ENCODE measurements at regions of chr4 and their contacts with region 1.

Region 1: GRCh38 chr4:121252224-121252806 is 88.2 kb upstream of the TNIP3 start:
- DNase-seq: peak; percentile 52 to 76
- ATAC-seq: peak; percentile 64 to 82 (median 73)
- H3K4me3 ChIP-seq: no peak overlapping the region
- H3K27ac ChIP-seq: no peak overlapping the region
- H3K4me1 ChIP-seq: peaks cover 3% of the 10 kb centered on the region
- H3K27me3 ChIP-seq: no peaks in the 10 kb centered on the region
- CTCF ChIP-seq: peak; percentile 78

Region 2: DNA sequence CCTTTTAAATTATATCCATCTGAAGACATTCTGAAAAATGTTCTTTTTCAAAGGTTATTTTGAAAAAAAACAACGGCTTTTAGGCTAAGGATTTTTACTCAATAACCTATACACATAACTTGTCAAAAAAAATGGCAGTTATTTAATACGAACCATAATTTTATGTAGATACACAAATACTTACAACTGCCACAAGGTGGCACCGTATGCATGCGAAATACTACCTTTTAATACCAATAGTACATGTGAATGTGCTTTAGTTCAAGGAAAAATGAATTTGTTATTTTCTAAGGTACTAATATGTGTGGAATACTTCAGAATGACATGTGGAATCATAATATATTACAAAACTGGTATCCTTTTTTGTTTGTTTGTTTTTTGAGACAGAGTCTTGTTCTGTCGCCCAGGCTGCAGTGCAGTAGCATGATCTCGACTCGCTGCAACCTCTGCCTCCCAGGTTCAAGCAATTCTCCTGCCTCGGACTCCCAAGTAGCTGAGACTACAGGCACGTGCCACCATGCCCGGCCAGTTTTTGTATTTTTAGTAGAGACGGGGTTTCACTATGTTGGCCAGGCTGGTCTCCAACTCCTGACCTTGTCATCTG is 1181.0 kb before region 1 on chr4:
- intact Hi-C with region 1: loop called (anchors 10 kb)
- DNase-seq: no peak
- ATAC-seq: no peak
- H3K4me3 ChIP-seq: no peak overlapping the region
- H3K27ac ChIP-seq: no peak overlapping the region
- H3K4me1 ChIP-seq: peaks cover 30% of the 10 kb centered on the region
- H3K27me3 ChIP-seq: no peaks in the 10 kb centered on the region
- CTCF ChIP-seq: peak; percentile 76

Region 3: GRCh38 chr4:120156120-120156718 is 1096.1 kb before region 1 on chr4:
- intact Hi-C with region 1: loop called (anchors 5 kb)
- DNase-seq: no peak
- ATAC-seq: peak in 1 of 4 donors; percentile 64
- H3K4me3 ChIP-seq: no peak overlapping the region
- H3K27ac ChIP-seq: no peak overlapping the region
- H3K4me1 ChIP-seq: no peaks in the 10 kb centered on the region
- H3K27me3 ChIP-seq: no peaks in the 10 kb centered on the region
- CTCF ChIP-seq: peak; percentile 75

Region 4: GRCh38 chr4:121192480-121192879 is 59.8 kb before region 1 on chr4:
- intact Hi-C with region 1: loop called (anchors 2 to 5 kb)
- DNase-seq: no peak
- ATAC-seq: peak in 1 of 4 donors; percentile 49
- H3K4me3 ChIP-seq: peak overlapping the region; percentile 42
- H3K27ac ChIP-seq: no peak overlapping the region
- H3K4me1 ChIP-seq: no peaks in the 10 kb centered on the region
- H3K27me3 ChIP-seq: no peaks in the 10 kb centered on the region
- CTCF ChIP-seq: peak; percentile 69

Region 5: GRCh38 chr4:121535351-121535750 is 283.0 kb after region 1 on chr4:
- intact Hi-C with region 1: no loop called
- DNase-seq: no peak
- ATAC-seq: no peak
- H3K4me3 ChIP-seq: no peak overlapping the region
- H3K27ac ChIP-seq: no peak overlapping the region
- H3K4me1 ChIP-seq: no peaks in the 10 kb centered on the region
- H3K27me3 ChIP-seq: no peaks in the 10 kb centered on the region
- CTCF ChIP-seq: no peak